ENCODE measurements at regions of chr14 and their contacts with region 1.

Region 1: GRCh38 chr14:22556990-22557623 is 31.9 kb downstream of the DAD1 start:
- DNase-seq: peak; percentile 94
- H3K4me3 Mint-ChIP-seq: peak overlapping the region; percentile 78
- H3K27ac Mint-ChIP-seq: peak overlapping the region; percentile 99
- H3K4me1 Mint-ChIP-seq: peaks cover 87% of the 10 kb centered on the region
- H3K27me3 Mint-ChIP-seq: peaks cover 4% of the 10 kb centered on the region

Region 2: GRCh38 chr14:21734457-21735074 is 822.5 kb before region 1 on chr14:
- CTCF ChIA-PET with region 1: interaction called, 3 read pairs
- POLR2A ChIA-PET with region 1: no interaction called
- intact Hi-C with region 1: loop called (anchors 5 kb)
- DNase-seq: peak; percentile 37
- H3K4me3 Mint-ChIP-seq: peak overlapping the region; percentile 36
- H3K27ac Mint-ChIP-seq: peak overlapping the region; percentile 31
- H3K4me1 Mint-ChIP-seq: peaks cover 11% of the 10 kb centered on the region
- H3K27me3 Mint-ChIP-seq: peaks cover 41% of the 10 kb centered on the region

Region 3: GRCh38 chr14:21997300-21997699 is 559.8 kb before region 1 on chr14:
- CTCF ChIA-PET with region 1: interaction called, 11 read pairs
- POLR2A ChIA-PET with region 1: interaction called, 6 read pairs
- intact Hi-C with region 1: no loop called
- DNase-seq: peak; percentile 54
- H3K4me3 Mint-ChIP-seq: peak overlapping the region; percentile 78
- H3K27ac Mint-ChIP-seq: peak overlapping the region; percentile 91
- H3K4me1 Mint-ChIP-seq: peaks cover 11% of the 10 kb centered on the region
- H3K27me3 Mint-ChIP-seq: no peaks in the 10 kb centered on the region

Region 4: GRCh38 chr14:22319526-22320361 is 237.4 kb before region 1 on chr14:
- CTCF ChIA-PET with region 1: no interaction called
- POLR2A ChIA-PET with region 1: no interaction called
- intact Hi-C with region 1: loop called (anchors 5 kb)
- DNase-seq: peak; percentile 9
- H3K4me3 Mint-ChIP-seq: peak overlapping the region; percentile 56
- H3K27ac Mint-ChIP-seq: peak overlapping the region; percentile 80
- H3K4me1 Mint-ChIP-seq: no peaks in the 10 kb centered on the region
- H3K27me3 Mint-ChIP-seq: no peaks in the 10 kb centered on the region

Region 5: DNA sequence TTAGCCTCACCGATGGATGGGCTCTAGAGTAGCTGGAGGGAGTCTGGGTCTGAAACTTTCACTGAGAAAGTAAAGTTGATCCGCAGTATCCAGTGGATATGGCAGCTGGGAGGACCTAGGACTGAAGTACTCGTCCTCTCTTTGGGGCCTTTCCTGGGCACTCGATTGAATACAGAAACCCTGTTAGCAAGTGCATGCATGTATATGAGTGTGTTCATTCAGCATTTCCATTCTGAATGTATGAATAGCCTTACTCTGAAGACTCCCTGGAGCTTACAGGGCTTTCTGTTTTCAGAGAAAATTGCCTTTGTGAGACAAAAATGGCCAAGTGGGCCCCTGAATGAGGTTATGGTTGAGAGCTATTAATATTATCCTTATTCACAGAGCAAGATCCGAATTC is 30.9 kb before region 1 on chr14:
- CTCF ChIA-PET with region 1: interaction called, 28 read pairs
- POLR2A ChIA-PET with region 1: interaction called, 157 read pairs
- intact Hi-C with region 1: no loop called
- DNase-seq: no peak
- H3K4me3 Mint-ChIP-seq: peak overlapping the region; percentile 83
- H3K27ac Mint-ChIP-seq: peak overlapping the region; percentile 99
- H3K4me1 Mint-ChIP-seq: peaks cover 85% of the 10 kb centered on the region
- H3K27me3 Mint-ChIP-seq: no peaks in the 10 kb centered on the region

Region 6: DNA sequence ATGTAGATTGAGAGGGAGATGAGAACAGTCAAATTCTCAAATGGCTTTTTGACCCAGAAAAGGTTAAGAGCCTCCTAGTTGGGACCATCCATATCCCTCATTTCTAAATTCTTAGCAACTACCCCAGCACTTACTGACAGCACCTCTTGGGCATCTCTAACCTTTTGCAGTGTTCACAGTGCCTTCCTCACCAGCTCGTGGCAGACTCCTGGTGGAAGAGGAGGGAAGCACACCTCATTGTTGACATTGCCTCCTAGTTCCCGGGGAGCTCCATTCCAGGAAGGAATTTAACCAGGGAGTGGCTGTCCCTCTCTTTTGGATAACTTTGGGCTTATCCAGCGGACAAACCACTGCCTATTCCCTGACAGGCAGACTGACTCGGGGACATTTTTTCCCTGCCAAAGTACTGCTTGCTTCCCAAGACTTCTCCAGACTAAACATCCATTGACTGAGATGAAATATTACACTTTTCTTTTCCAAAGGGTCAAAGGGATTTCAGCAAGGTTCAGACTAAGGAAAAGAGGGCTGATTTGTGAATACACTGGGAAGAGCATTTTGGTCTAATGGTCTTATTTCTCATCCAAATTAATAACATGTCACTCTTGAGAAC is 96.0 kb after region 1 on chr14:
- CTCF ChIA-PET with region 1: interaction called, 5 read pairs
- POLR2A ChIA-PET with region 1: interaction called, 3 read pairs
- intact Hi-C with region 1: loop called (anchors 1 kb)
- DNase-seq: peak; percentile 66
- H3K4me3 Mint-ChIP-seq: no peak overlapping the region
- H3K27ac Mint-ChIP-seq: no peak overlapping the region
- H3K4me1 Mint-ChIP-seq: no peaks in the 10 kb centered on the region
- H3K27me3 Mint-ChIP-seq: no peaks in the 10 kb centered on the region

Region 7: DNA sequence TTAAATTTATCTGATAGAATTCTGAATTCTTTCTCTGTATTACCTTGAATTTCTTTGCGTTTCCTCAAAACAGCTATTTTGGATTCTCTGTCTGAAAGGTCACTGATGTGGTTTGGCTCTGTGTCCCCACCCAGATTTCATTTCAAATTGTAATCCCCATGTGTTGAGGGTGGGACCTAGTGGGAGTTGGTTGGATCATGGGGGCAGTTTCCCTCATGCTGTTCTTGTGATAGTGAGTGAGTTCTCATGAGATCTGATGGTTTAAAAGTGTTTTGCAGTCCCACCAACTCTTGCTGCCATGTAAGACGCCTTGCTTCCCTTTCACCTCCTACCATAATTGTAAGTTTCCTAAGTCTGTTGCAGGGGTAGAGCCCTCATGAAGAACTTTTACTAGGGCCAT is 121.1 kb after region 1 on chr14:
- CTCF ChIA-PET with region 1: no interaction called
- POLR2A ChIA-PET with region 1: no interaction called
- intact Hi-C with region 1: no loop called
- DNase-seq: no peak
- H3K4me3 Mint-ChIP-seq: no peak overlapping the region
- H3K27ac Mint-ChIP-seq: no peak overlapping the region
- H3K4me1 Mint-ChIP-seq: no peaks in the 10 kb centered on the region
- H3K27me3 Mint-ChIP-seq: peaks cover 43% of the 10 kb centered on the region

Region 8: GRCh38 chr14:22918804-22919600 is 361.9 kb after region 1 on chr14 and contains the start of gene RBM23:
- CTCF ChIA-PET with region 1: no interaction called
- POLR2A ChIA-PET with region 1: interaction called, 3 read pairs
- intact Hi-C with region 1: loop called (anchors 2 kb)
- DNase-seq: peak; percentile 100
- H3K4me3 Mint-ChIP-seq: peak within 1 kb of the TSS; percentile 84
- H3K27ac Mint-ChIP-seq: peak within 1 kb of the TSS; percentile 99
- H3K4me1 Mint-ChIP-seq: peaks cover 35% of the 10 kb centered on the region
- H3K27me3 Mint-ChIP-seq: no peaks in the 10 kb centered on the region
- total RNA-seq, gene RBM23: 55.0 to 56.0 TPM